ENCODE measurements at regions of chr7 and their contacts with region 1.

Region 1: DNA sequence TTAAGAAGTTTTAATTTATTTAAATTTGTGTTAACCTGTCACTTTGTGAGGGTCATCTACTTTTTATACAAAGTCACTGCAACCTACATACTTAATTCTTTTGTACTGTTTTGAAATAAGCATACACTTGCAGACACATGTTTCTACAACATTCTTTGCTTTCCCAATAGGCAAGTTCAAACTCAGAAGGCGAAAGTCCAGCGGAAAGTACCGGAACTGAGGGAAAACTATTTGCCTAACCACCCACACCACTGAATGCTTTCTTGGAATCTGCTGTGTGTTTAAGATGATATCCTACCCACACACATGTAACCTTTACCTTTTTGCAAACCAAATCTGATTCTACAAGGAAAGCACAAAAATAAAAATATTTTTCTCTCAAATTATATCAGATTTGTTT is 139.4 kb upstream of the AGR3 start:
- DNase-seq: no peak
- H3K4me3 ChIP-seq: no peak overlapping the region
- H3K27ac ChIP-seq: no peak overlapping the region
- H3K4me1 ChIP-seq: no peaks in the 10 kb centered on the region
- H3K27me3 ChIP-seq: no peaks in the 10 kb centered on the region
- CTCF ChIP-seq: no peak
- EP300 ChIP-seq: no peak
- POLR2A ChIP-seq: no peak
- RAD21 ChIP-seq: no peak

Region 2: GRCh38 chr7:17009007-17009719 is 12.0 kb before region 1 on chr7:
- CTCF ChIA-PET with region 1: interaction called, 15 read pairs
- POLR2A ChIA-PET with region 1: no interaction called
- DNase-seq: no peak
- H3K4me3 ChIP-seq: no peak overlapping the region
- H3K27ac ChIP-seq: no peak overlapping the region
- H3K4me1 ChIP-seq: no peaks in the 10 kb centered on the region
- H3K27me3 ChIP-seq: no peaks in the 10 kb centered on the region
- CTCF ChIP-seq: peak in 1 of 3 experiments; percentile 53; a peak in 1 of 4 replicates
- EP300 ChIP-seq: no peak
- POLR2A ChIP-seq: no peak
- RAD21 ChIP-seq: peak; percentile 51 to 55

Region 3: DNA sequence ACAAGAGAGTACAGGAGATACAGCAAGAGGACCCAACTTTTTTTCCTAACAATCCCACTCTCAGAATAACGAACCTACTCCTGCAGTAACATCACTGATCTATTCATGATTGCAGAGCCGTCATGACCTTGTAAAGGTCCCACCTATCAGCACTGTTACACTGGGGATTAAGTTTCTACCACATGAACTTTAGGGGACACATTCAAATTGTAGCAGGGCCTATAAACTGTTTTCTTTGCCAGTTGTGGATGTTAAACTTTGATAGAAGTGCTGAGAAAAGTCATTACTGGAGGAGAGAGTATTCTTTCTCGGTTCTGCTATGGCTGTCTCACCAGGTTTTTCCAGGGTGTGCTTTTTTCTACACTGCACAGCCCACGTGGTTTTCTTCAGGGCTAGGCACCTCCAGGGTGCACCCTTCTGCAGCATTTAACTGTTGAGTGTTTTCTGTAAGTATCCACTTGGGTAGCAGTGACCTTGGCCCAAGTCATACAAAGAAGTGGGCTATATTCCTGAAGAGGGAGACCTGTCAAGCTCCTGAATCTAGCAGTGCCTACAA is 145.7 kb after region 1 on chr7:
- CTCF ChIA-PET with region 1: no interaction called
- POLR2A ChIA-PET with region 1: no interaction called
- DNase-seq: no peak
- H3K4me3 ChIP-seq: no peak overlapping the region
- H3K27ac ChIP-seq: no peak overlapping the region
- H3K4me1 ChIP-seq: no peaks in the 10 kb centered on the region
- H3K27me3 ChIP-seq: no peaks in the 10 kb centered on the region
- CTCF ChIP-seq: no peak
- EP300 ChIP-seq: no peak
- POLR2A ChIP-seq: no peak
- RAD21 ChIP-seq: no peak